ENCODE measurements at regions of chr14 and their contacts with region 1.

Region 1: GRCh38 chr14:50003213-50004031 is 110.5 kb downstream of the ARF6 start:
- DNase-seq: peak; percentile 71
- ATAC-seq: peak; percentile 70
- H3K4me3 ChIP-seq: peak overlapping the region; percentile 67 to 80 (median 78)
- H3K27ac ChIP-seq: peak overlapping the region; percentile 87
- H3K4me1 ChIP-seq: peaks cover 61% of the 10 kb centered on the region
- H3K27me3 ChIP-seq: no peaks in the 10 kb centered on the region
- CTCF ChIP-seq: peak; percentile 46; the same call in 1 of the 2 replicates
- EP300 ChIP-seq: peak in 1 of 2 experiments; percentile 41; a peak in 2 of 4 replicates
- POLR2A ChIP-seq: peak; percentile 60 to 84
- RAD21 ChIP-seq: no peak

Region 2: DNA sequence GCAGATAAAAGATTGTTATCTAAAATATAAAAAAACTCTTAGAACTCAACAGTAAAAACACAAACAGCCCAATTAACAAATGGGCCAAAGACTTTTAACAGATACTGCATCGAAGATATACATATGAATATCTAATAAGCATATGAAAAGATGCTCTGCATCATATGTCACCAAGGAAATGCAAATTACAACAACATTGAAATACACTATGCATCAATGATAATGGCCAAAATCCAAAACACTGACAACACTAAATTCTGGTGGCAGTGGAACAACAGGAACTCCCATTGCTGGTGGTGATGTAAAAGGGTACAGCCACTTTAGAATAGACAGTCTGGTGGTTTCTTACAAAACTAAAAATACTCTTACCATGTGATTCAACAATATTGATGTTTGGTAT is 194.6 kb before region 1 on chr14:
- CTCF ChIA-PET with region 1: no interaction called
- POLR2A ChIA-PET with region 1: no interaction called
- in situ Hi-C with region 1: no loop called
- intact Hi-C with region 1: no loop called
- DNase-seq: no peak
- ATAC-seq: no peak
- H3K4me3 ChIP-seq: no peak overlapping the region
- H3K27ac ChIP-seq: no peak overlapping the region
- H3K4me1 ChIP-seq: no peaks in the 10 kb centered on the region
- H3K27me3 ChIP-seq: no peaks in the 10 kb centered on the region
- CTCF ChIP-seq: no peak
- EP300 ChIP-seq: no peak
- POLR2A ChIP-seq: no peak
- RAD21 ChIP-seq: no peak

Region 3: DNA sequence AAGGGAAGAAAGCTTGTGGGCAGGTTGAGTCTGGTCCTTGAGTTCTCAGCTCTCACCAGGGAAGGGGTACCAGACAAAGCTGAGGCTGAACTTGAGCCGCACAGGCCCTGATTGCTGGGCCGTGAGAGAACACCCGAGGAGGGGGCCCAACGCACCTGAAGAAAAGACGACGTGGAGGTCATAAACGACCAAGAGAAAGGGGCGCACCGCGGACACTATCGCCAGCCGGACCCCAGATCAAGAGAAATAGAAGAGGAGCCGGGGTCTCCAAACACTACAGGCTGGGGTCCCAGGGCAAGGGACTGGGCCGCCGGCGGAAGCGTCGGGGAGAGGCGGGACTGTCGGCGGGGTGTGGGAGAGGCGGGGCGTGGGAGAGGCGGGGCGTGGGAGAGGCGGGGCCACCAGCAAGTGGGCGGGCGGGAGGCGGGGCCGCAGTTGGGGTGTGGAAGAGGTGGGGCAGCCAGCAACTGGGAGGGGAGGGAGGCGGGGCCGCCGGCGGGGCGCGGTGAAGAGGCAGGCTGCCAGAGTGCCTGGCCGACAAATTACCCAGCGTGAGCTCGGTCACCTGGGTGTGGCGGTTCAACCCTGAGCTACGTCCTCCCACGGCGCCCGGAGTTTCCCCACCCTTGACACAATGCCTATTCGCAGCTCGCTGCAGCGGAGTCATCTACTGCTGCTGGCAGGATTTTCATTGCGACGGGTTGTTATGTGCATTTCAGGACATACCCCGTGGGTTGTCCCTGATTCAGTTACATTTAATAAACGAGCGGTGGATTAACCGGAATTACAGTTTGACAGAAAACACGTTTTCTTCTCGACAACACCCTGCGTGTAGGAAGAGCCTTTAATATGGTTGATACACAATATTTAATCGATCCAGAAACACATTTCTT is 135.3 kb before region 1 on chr14:
- CTCF ChIA-PET with region 1: no interaction called
- POLR2A ChIA-PET with region 1: interaction called, 20 read pairs
- in situ Hi-C with region 1: no loop called
- intact Hi-C with region 1: loop called (anchors 2 kb)
- DNase-seq: peak; percentile 82
- ATAC-seq: peak; percentile 96
- H3K4me3 ChIP-seq: peak overlapping the region; percentile 79 to 89 (median 84)
- H3K27ac ChIP-seq: peak overlapping the region; percentile 61
- H3K4me1 ChIP-seq: peaks cover 28% of the 10 kb centered on the region
- H3K27me3 ChIP-seq: no peaks in the 10 kb centered on the region; a peak in 1 of 5 replicates
- CTCF ChIP-seq: no peak
- EP300 ChIP-seq: no peak
- POLR2A ChIP-seq: peak; percentile 55 to 66
- RAD21 ChIP-seq: no peak

Region 4: GRCh38 chr14:49892636-49893308 is 110.7 kb before region 1 on chr14 and contains the start of gene ARF6:
- CTCF ChIA-PET with region 1: no interaction called
- POLR2A ChIA-PET with region 1: interaction called, 23 read pairs
- in situ Hi-C with region 1: loop called (anchors 5 kb)
- intact Hi-C with region 1: loop called (anchors 1 kb)
- DNase-seq: peak; percentile 93
- ATAC-seq: peak; percentile 93
- H3K4me3 ChIP-seq: peak within 1 kb of the TSS; percentile 95 to 99 (median 97)
- H3K27ac ChIP-seq: peak within 1 kb of the TSS; percentile 98
- H3K4me1 ChIP-seq: peaks cover 29% of the 10 kb centered on the region
- H3K27me3 ChIP-seq: no peaks in the 10 kb centered on the region
- CTCF ChIP-seq: peak; percentile 64
- EP300 ChIP-seq: peak in 1 of 2 experiments; percentile 17; a peak in 1 of 4 replicates
- POLR2A ChIP-seq: peak; percentile 95 to 96
- RAD21 ChIP-seq: peak; percentile 57; the same call in 1 of the 2 replicates
- total RNA-seq, gene ARF6: 31.9 and 36.1 TPM in 2 replicates

Region 5: GRCh38 chr14:49966304-49966809 is 37.1 kb before region 1 on chr14:
- CTCF ChIA-PET with region 1: no interaction called
- POLR2A ChIA-PET with region 1: interaction called, 66 read pairs
- in situ Hi-C with region 1: no loop called
- intact Hi-C with region 1: loop called (anchors 5 kb)
- DNase-seq: peak; percentile 84
- ATAC-seq: peak; percentile 100
- H3K4me3 ChIP-seq: peak overlapping the region; percentile 18 to 45 (median 40); a peak in 5 of 6 replicates
- H3K27ac ChIP-seq: peak overlapping the region; percentile 86
- H3K4me1 ChIP-seq: peaks cover 68% of the 10 kb centered on the region
- H3K27me3 ChIP-seq: no peaks in the 10 kb centered on the region
- CTCF ChIP-seq: no peak
- EP300 ChIP-seq: no peak
- POLR2A ChIP-seq: peak; percentile 61 to 64
- RAD21 ChIP-seq: no peak

Region 6: DNA sequence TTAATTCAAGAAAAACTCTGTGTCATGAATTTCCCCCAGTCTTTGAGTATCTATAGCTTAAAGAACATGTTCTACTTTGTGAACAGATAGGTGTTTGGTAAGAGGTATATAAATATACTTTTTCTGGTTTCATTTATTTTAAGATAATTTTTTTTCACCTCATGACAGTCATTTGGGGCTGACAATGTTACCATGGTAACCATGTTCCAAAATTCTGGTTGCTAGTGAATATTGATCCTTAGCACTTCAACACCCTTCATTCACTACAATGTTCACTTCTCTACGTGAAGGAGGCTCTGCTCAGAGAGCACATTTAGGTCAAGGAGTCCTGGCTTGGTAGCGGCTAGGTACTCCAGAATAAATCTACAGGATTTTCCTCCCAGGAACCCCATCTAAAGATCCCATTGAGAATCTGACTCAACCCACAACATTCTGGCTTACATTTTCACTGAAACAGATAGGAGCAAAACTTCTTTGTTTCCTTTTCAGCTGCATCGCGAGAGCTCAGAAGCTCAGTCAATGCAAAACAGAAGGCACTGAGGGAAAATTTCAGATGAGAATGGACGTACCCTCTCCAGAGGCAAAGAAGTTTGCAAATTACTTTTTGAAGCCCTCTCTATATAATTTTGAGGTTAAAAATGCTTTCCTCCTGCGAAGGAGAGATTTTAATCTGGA is 16.9 kb before region 1 on chr14:
- CTCF ChIA-PET with region 1: no interaction called
- POLR2A ChIA-PET with region 1: interaction called, 67 read pairs
- in situ Hi-C with region 1: no loop called
- intact Hi-C with region 1: loop called (anchors 2 kb)
- DNase-seq: peak; percentile 52
- ATAC-seq: peak; percentile 55
- H3K4me3 ChIP-seq: peak overlapping the region; percentile 24 to 48 (median 36); a peak in 4 of 6 replicates
- H3K27ac ChIP-seq: peak overlapping the region; percentile 98
- H3K4me1 ChIP-seq: peaks cover 73% of the 10 kb centered on the region
- H3K27me3 ChIP-seq: no peaks in the 10 kb centered on the region
- CTCF ChIP-seq: no peak
- EP300 ChIP-seq: no peak
- POLR2A ChIP-seq: no peak
- RAD21 ChIP-seq: no peak

Region 7: DNA sequence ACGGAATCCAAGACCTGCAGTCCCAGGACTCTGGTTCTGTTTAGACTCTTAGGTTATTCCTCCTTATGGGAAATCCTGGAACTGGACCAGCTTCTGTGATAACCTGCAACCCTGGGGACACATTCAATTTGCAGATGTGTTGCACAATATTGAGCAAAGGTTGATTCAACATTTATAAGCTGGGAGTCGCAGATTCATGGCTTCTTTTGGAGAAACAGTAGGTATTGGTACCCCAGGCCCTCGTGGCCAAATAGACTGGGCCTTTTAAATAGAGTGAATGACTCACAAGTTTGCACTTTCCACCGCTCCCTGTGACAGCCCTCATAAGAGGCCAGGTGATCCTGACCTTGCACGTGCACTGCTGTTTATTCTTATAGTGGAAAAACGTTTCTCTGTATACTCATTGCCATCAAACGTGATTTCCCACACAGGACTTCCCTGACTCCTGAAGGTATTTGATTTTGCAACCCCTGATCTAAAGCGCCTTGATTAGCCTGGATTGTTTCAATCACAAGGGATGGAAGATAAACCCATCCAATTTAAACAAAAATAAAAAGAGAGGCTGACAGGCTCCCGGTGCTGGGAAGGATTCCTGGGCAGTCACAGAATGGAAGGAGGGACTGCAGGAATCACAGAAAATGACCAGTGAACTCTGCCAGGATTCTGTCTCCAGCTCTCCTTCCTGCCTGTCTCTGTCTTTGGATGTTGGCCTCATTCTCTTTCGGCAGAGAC is 14.9 kb after region 1 on chr14:
- CTCF ChIA-PET with region 1: no interaction called
- POLR2A ChIA-PET with region 1: interaction called, 41 read pairs
- in situ Hi-C with region 1: no loop called
- intact Hi-C with region 1: no loop called
- DNase-seq: peak; percentile 83
- ATAC-seq: peak; percentile 90
- H3K4me3 ChIP-seq: peak overlapping the region in 2 of 3 experiments; percentile 3 to 17; a peak in 3 of 6 replicates
- H3K27ac ChIP-seq: no peak overlapping the region
- H3K4me1 ChIP-seq: peaks cover 50% of the 10 kb centered on the region
- H3K27me3 ChIP-seq: no peaks in the 10 kb centered on the region; a peak in 1 of 5 replicates
- CTCF ChIP-seq: no peak
- EP300 ChIP-seq: 0 out of 4 replicates have a peak, but pooled peaks of 1 of the 2 experiments have one; percentile 53
- POLR2A ChIP-seq: no peak
- RAD21 ChIP-seq: no peak

Region 8: GRCh38 chr14:50109342-50109741 is 105.9 kb after region 1 on chr14:
- CTCF ChIA-PET with region 1: interaction called, 3 read pairs
- POLR2A ChIA-PET with region 1: no interaction called
- in situ Hi-C with region 1: loop called (anchors 5 kb)
- intact Hi-C with region 1: loop called (anchors 5 kb)
- DNase-seq: peak; percentile 23
- ATAC-seq: peak; percentile 65
- H3K4me3 ChIP-seq: no peak overlapping the region
- H3K27ac ChIP-seq: no peak overlapping the region
- H3K4me1 ChIP-seq: peaks cover 1% of the 10 kb centered on the region
- H3K27me3 ChIP-seq: no peaks in the 10 kb centered on the region
- CTCF ChIP-seq: no peak
- EP300 ChIP-seq: no peak
- POLR2A ChIP-seq: no peak
- RAD21 ChIP-seq: no peak

Measured in HepG2 (cell line).